AG04449 (cell line): ENCODE measurements at regions of chr10 and their contacts with region 1.

Region 1: GRCh38 chr10:73940634-73941221 is 29.8 kb downstream of the PLAU start:
- DNase-seq: no peak
- H3K4me3 ChIP-seq: no peak overlapping the region; the same call in 1 of the 2 replicates
- CTCF ChIP-seq: peak; percentile 99

Region 2: DNA sequence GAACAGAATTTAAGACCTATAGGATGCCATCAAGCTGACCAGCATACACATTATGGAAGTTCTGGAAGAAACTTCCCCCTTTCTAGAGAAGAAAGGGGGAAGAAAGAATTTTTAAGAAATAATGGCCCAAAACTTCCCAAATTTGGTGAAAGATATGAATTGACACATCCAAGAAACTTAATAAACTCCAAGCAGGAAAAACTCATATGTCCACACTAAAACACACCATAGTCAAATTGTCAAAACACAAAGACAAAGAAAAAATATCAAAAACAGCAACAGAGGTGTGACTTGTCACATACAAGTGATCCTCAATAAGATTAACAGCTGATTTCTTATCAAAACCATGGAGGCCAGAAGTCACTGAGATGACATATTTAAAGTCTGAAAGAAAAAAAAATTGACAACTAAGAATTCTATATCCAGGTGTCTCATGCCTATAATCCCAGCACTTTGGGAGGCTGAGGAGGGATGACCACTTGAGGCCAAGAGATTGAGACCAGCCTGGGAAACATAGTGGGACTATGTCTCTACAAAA is 634.5 kb before region 1 on chr10:
- CTCF ChIA-PET with region 1: no interaction called
- POLR2A ChIA-PET with region 1: no interaction called
- DNase-seq: no peak
- H3K4me3 ChIP-seq: no peak overlapping the region
- CTCF ChIP-seq: no peak

Region 3: DNA sequence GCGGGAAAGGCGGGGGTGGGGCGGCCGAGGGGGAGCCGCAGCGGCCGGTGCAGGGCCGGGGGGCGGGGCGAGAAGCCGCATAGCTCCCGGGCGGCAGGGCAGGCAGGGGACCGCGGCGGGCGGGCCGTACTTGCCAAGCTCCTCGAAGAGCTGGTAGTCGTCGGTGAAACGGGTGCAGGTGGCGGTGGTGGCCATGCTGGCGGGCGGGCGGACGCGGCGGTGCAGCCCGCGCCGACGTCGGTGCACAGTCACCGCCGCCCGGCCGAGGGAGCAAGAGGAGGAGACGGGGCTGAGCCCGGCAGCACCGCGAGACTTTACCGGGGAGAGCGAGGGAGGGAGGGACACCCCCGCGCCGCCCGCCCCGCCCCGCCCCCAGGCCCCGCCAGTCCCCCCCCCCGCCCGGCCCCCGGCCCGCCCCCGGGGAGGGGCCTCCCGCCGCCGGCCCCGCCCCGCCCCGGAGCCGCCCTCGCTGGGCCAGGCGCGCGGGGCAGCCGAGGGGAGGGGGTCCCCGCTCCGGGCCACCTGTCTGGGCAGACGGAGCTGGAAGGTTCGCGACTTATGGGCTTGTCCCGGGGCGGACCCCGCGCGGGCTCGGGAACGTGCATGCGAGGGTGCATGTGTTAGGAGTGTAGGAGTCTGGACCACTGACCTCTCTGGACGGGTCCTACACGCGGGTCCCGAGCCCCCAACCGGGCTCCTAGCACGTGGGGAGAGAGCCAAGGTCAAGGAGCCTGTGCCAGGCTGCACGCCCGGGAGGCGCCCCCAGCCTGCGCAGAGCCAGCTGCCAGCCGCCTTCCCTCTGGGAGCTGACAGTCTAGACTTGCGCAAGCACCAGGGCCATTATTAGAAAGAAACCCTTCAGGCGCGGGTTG is 66.2 kb before region 1 on chr10 and contains the start of gene CAMK2G:
- CTCF ChIA-PET with region 1: interaction called, 806 read pairs
- POLR2A ChIA-PET with region 1: no interaction called
- DNase-seq: no peak
- H3K4me3 ChIP-seq: peak within 1 kb of the TSS; percentile 76
- CTCF ChIP-seq: no peak

Region 4: GRCh38 chr10:73908853-73909538 is 31.7 kb before region 1 on chr10:
- CTCF ChIA-PET with region 1: interaction called, 43 read pairs
- POLR2A ChIA-PET with region 1: interaction called, 6 read pairs
- DNase-seq: peak; percentile 85
- H3K4me3 ChIP-seq: peak overlapping the region; percentile 7; the same call in 1 of the 2 replicates
- CTCF ChIP-seq: no peak

Region 5: DNA sequence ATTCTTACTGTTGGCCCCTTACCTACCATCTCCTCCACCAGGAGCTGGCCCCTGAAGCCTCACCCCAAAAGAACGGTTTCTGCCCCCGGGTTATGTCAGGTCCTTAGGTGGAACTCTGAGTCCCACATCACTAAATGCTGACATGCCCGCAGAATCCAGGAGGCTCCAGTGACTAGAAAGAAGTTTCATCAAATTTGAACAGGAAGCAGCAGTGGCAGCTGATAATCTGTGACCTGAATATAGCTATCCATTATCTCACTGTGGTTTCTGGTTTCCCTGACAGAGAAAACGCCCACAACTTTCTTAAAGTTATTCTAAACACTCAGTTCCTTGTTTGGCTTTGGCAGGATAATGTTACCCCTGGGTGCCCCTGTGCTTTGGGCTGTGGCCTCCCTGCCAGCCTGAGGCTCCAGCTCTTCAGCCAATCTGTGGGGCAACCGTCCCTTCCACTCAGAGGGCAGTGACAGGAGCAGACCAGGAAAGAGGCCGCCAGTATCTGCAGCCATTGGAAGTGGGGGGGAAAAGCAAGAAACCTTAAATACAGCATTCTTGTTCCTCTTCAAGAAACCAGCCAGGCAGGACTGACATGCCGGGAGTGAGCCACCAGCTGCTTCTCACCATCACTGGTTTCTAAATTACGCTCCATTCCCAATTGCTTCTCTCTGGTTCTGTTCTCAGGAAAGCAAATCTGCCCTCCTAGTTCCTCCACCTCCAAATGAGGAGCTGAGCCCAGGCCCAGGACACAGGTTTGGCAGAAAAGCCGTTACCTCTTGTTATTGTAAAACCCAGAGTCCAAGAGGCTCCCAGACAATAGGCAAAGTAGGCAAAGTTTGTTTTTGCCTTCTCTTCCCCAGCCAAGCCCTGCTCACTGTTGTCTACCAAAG is 16.0 kb after region 1 on chr10:
- CTCF ChIA-PET with region 1: interaction called, 63 read pairs
- POLR2A ChIA-PET with region 1: no interaction called
- DNase-seq: no peak
- H3K4me3 ChIP-seq: no peak overlapping the region
- CTCF ChIP-seq: no peak

Region 6: DNA sequence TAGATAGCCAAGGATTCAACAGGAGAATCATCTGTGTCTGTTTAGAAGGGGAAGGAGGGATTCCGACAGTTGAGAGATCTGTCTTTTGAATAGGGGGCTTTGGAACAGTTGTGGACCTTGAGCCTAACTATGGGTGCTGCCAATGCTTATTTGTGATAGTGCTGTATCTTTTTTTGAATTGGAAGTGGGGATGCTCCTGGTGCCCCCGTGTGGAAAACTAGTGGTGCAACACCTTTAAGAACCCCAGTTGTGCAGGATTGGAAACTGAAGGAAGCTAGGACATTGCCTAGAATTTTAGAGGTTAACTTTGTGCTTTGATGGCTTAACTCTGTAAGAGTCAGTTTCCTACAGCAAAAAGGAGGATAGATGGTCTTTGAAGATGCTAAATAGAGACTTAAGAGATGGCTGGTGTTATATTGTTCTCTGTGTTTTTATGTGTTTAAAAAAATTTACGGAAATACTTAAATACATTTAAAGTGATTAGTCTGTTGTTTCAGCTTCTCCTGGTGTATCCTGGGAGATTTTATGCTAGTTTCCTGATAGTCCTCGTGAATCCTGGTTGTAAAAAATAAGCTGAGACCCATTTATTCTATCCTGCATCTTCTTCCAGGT is 140.6 kb after region 1 on chr10:
- CTCF ChIA-PET with region 1: interaction called, 31 read pairs
- POLR2A ChIA-PET with region 1: no interaction called
- DNase-seq: no peak
- H3K4me3 ChIP-seq: no peak overlapping the region
- CTCF ChIP-seq: peak; percentile 71